T-cell (primary cell): ENCODE measurements at regions of chr19 and their contacts with region 1.

Region 1: DNA sequence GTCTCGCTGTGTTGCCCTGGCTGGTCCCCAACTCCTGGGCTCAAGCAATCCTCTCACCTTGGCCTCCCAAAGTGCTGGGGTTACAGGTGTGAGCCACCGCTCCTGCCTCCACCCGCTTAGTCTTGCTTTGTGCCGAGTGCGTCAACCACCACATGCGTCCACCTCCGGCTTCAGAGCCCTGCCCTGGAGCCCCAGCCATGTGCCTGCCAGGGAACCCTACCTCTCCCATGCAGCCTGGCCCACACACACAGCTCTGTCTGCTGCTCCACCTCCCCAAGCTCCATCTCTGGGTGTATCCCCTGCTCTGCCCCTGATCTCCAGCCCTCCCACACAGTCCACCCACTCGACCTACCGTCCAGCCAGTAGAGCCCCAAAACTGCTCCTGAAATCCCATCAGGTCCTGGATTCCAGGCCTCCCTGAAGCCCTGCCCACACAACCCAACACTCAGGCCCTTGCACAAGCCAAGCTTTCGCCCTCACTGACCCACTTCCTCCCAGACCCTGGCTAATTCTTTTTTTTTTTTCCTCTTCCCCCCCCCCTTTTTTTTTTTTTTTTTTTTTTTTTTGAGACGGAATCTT is 9.6 kb downstream of the CYP2F1 start:
- DNase-seq: no peak
- ATAC-seq: no peak
- H3K4me3 ChIP-seq: no peak overlapping the region
- H3K4me3 Mint-ChIP-seq: no peak overlapping the region
- H3K27ac ChIP-seq: no peak overlapping the region
- H3K27ac Mint-ChIP-seq: peak overlapping the region; percentile 19 to 43
- H3K4me1 ChIP-seq: peaks cover 4 to 49% of the 10 kb centered on the region in 2 experiments
- H3K4me1 Mint-ChIP-seq: peaks cover 51 to 56% (median 54%) of the 10 kb centered on the region in 3 donors
- H3K27me3 ChIP-seq: no peaks in the 10 kb centered on the region
- H3K27me3 Mint-ChIP-seq: no peaks in the 10 kb centered on the region

Region 2: GRCh38 chr19:40743886-40744285 is 379.9 kb before region 1 on chr19:
- CTCF ChIA-PET with region 1: interaction called in 1 of 2 experiments, 12 read pairs
- POLR2A ChIA-PET with region 1: no interaction called
- DNase-seq: no peak
- ATAC-seq: no peak
- H3K4me3 ChIP-seq: no peak overlapping the region
- H3K4me3 Mint-ChIP-seq: no peak overlapping the region
- H3K27ac ChIP-seq: no peak overlapping the region
- H3K27ac Mint-ChIP-seq: no peak overlapping the region
- H3K4me1 ChIP-seq: no peaks in the 10 kb centered on the region
- H3K4me1 Mint-ChIP-seq: peaks cover 0 to 3% (median 0%) of the 10 kb centered on the region in 3 donors
- H3K27me3 ChIP-seq: no peaks in the 10 kb centered on the region
- H3K27me3 Mint-ChIP-seq: no peaks in the 10 kb centered on the region

Region 3: DNA sequence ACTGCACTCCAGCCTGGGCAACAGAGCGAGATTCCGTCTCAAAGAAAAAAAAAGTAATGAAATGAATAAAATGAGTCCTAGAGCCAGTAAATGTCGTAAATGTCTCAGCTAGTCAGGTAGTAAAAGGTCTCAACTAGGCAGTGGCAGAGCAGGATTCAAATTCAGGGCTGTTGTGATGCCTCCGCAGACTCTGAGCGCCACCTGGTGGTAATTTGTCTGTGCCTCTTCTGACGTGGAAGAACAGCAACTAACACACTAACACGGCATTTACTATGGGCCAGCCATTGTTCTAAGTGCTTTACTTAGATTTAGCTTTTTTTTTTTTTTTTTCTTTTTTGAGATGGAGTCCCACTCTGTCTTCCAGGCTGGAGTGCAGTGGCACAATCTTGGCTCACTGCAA is 20.6 kb after region 1 on chr19:
- CTCF ChIA-PET with region 1: interaction called in 1 of 2 experiments, 11 read pairs
- POLR2A ChIA-PET with region 1: no interaction called
- DNase-seq: peak; percentile 70 to 95 (median 84)
- ATAC-seq: peak; percentile 80 to 99 (median 94)
- H3K4me3 ChIP-seq: no peak overlapping the region
- H3K4me3 Mint-ChIP-seq: no peak overlapping the region
- H3K27ac ChIP-seq: no peak overlapping the region
- H3K27ac Mint-ChIP-seq: no peak overlapping the region
- H3K4me1 ChIP-seq: no peaks in the 10 kb centered on the region
- H3K4me1 Mint-ChIP-seq: peaks cover 0 to 2% (median 2%) of the 10 kb centered on the region in 3 donors
- H3K27me3 ChIP-seq: peaks cover 0 to 20% of the 10 kb centered on the region in 2 experiments
- H3K27me3 Mint-ChIP-seq: peaks cover 8 to 22% of the 10 kb centered on the region in 2 donors

Region 4: DNA sequence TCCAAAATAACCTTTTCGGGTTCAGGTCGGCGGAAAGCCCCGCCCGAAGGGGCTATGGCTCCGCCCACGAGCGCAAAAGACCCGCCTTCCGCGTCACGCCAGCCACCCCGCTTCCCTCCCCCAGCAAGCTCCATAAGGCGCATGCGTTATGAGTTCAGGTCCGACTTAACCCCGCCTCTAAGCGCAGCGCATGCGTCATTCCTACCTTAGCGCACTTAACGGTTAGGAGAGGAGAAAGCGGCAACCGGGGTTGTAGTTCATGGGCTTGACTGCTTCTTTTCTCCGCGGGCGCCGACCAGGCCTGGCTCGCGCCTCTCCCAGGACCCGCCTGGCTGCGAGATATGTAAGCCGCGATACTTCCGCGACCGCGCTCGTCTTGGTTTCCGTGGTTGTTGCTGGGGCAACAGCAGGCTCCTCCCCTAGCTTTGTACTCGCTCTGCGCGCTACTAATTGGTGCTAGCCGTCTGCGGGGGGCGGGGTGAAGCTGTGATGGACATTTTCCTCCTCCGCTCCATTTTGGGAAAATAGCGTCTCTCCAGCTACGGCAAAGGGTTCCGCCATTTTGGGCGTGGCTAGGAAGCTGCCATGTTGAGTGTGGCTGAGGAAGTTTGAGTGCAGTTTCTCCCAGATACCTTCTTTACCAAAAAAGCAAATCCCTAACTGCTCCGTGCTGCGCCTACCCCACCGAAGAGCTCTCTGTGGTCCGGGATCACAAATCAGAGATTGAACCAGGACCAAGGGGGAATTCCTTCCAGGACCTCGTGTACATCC is 240.1 kb after region 1 on chr19 and contains the start of gene B9D2:
- CTCF ChIA-PET with region 1: no interaction called
- POLR2A ChIA-PET with region 1: interaction called in 1 of 2 experiments, 13 read pairs
- DNase-seq: peak; percentile 96 to 99 (median 99)
- ATAC-seq: peak; percentile 94 to 97 (median 96)
- H3K4me3 ChIP-seq: peak within 1 kb of the TSS; percentile 85
- H3K4me3 Mint-ChIP-seq: peak within 1 kb of the TSS; percentile 83 to 94 (median 89)
- H3K27ac ChIP-seq: peak within 1 kb of the TSS; percentile 99
- H3K27ac Mint-ChIP-seq: peak within 1 kb of the TSS; percentile 98 to 100
- H3K4me1 ChIP-seq: peaks cover 13 to 31% of the 10 kb centered on the region in 2 experiments
- H3K4me1 Mint-ChIP-seq: peaks cover 28 to 40% (median 36%) of the 10 kb centered on the region in 3 donors
- H3K27me3 ChIP-seq: no peaks in the 10 kb centered on the region
- H3K27me3 Mint-ChIP-seq: no peaks in the 10 kb centered on the region
- total RNA-seq, gene B9D2: 15.3 to 27.9 (median 16.4) TPM